Activated CD4-positive, alpha-beta memory T cell treated with anti-CD3 and anti-CD28 coated beads, Interleukin-2, amount 10 ng/mL, durations not matched to agents 7 days and 5 days (primary cell): ENCODE measurements at regions of chr1 and their contacts with region 1.

Region 1: GRCh38 chr1:235011599-235012435 is 116.8 kb downstream of the TOMM20 start:
- DNase-seq: peak; percentile 98
- H3K4me3 Mint-ChIP-seq: peak overlapping the region; percentile 57
- H3K27ac Mint-ChIP-seq: peak overlapping the region; percentile 94
- H3K4me1 Mint-ChIP-seq: peaks cover 78% of the 10 kb centered on the region
- H3K27me3 Mint-ChIP-seq: peaks cover 11% of the 10 kb centered on the region

Region 2: GRCh38 chr1:234599617-234600417 is 412.0 kb before region 1 on chr1:
- CTCF ChIA-PET with region 1: interaction called, 5 read pairs
- POLR2A ChIA-PET with region 1: interaction called, 24 read pairs
- DNase-seq: peak; percentile 77
- H3K4me3 Mint-ChIP-seq: peak overlapping the region; percentile 85
- H3K27ac Mint-ChIP-seq: peak overlapping the region; percentile 96
- H3K4me1 Mint-ChIP-seq: peaks cover 52% of the 10 kb centered on the region
- H3K27me3 Mint-ChIP-seq: no peaks in the 10 kb centered on the region

Region 3: GRCh38 chr1:234730770-234731568 is 280.8 kb before region 1 on chr1:
- CTCF ChIA-PET with region 1: no interaction called
- POLR2A ChIA-PET with region 1: interaction called, 30 read pairs
- DNase-seq: peak; percentile 59
- H3K4me3 Mint-ChIP-seq: peak overlapping the region; percentile 38
- H3K27ac Mint-ChIP-seq: peak overlapping the region; percentile 92
- H3K4me1 Mint-ChIP-seq: peaks cover 68% of the 10 kb centered on the region
- H3K27me3 Mint-ChIP-seq: no peaks in the 10 kb centered on the region

Region 4: GRCh38 chr1:234925440-234926263 is 86.2 kb before region 1 on chr1:
- CTCF ChIA-PET with region 1: interaction called, 3 read pairs
- POLR2A ChIA-PET with region 1: interaction called, 22 read pairs
- DNase-seq: no peak
- H3K4me3 Mint-ChIP-seq: peak overlapping the region; percentile 53
- H3K27ac Mint-ChIP-seq: peak overlapping the region; percentile 87
- H3K4me1 Mint-ChIP-seq: peaks cover 40% of the 10 kb centered on the region
- H3K27me3 Mint-ChIP-seq: no peaks in the 10 kb centered on the region

Region 5: GRCh38 chr1:234970731-234971476 is 40.9 kb before region 1 on chr1:
- CTCF ChIA-PET with region 1: interaction called, 3 read pairs
- POLR2A ChIA-PET with region 1: interaction called, 89 read pairs
- DNase-seq: peak; percentile 47
- H3K4me3 Mint-ChIP-seq: peak overlapping the region; percentile 16
- H3K27ac Mint-ChIP-seq: peak overlapping the region; percentile 58
- H3K4me1 Mint-ChIP-seq: peaks cover 68% of the 10 kb centered on the region
- H3K27me3 Mint-ChIP-seq: no peaks in the 10 kb centered on the region

Region 6: DNA sequence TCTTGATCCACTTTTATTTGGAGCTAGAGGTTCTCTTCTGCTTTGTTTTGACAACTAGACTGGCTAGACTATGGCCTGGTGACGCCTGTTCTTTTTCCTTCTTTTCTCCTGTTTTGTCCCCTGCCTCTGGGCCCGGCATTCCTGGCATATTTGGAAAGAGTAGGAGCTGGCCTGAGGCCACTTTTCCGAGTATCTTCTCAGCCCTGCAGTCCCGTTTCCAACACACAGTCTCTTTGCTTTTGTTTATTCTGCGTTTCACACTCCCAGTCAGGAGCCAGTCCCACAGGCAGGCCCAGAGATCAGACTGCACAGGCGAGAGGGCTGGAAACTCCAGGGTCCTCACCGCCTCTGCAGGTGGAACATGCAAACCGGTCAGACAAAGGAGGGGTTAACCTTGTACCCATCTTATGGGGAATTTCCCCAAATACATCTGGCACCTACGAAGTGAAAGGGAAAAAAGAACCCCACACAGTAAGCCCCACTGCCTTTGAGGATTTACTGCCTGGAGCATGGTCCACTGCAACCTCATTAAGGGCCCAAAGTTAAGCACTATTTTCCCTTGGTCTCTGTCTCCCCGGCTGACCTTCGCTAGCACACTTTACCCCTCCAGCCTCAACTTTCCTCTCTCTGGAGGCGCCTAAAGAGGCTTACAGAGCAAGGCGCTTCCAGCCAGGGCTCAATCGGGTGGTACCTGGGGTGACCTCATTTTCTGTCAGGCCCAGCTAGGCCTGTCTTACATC is 24.2 kb before region 1 on chr1:
- CTCF ChIA-PET with region 1: interaction called, 5 read pairs
- POLR2A ChIA-PET with region 1: interaction called, 14 read pairs
- DNase-seq: no peak
- H3K4me3 Mint-ChIP-seq: peak overlapping the region; percentile 5
- H3K27ac Mint-ChIP-seq: peak overlapping the region; percentile 63
- H3K4me1 Mint-ChIP-seq: peaks cover 61% of the 10 kb centered on the region
- H3K27me3 Mint-ChIP-seq: no peaks in the 10 kb centered on the region

Region 7: GRCh38 chr1:234999513-234999940 is 12.3 kb before region 1 on chr1:
- CTCF ChIA-PET with region 1: no interaction called
- POLR2A ChIA-PET with region 1: no interaction called
- DNase-seq: no peak
- H3K4me3 Mint-ChIP-seq: no peak overlapping the region
- H3K27ac Mint-ChIP-seq: no peak overlapping the region
- H3K4me1 Mint-ChIP-seq: peaks cover 12% of the 10 kb centered on the region
- H3K27me3 Mint-ChIP-seq: no peaks in the 10 kb centered on the region

Region 8: GRCh38 chr1:235047331-235047871 is 35.6 kb after region 1 on chr1:
- CTCF ChIA-PET with region 1: no interaction called
- POLR2A ChIA-PET with region 1: interaction called, 11 read pairs
- DNase-seq: no peak
- H3K4me3 Mint-ChIP-seq: no peak overlapping the region
- H3K27ac Mint-ChIP-seq: peak overlapping the region; percentile 84
- H3K4me1 Mint-ChIP-seq: peaks cover 50% of the 10 kb centered on the region
- H3K27me3 Mint-ChIP-seq: no peaks in the 10 kb centered on the region